ENCODE measurements at regions of chr12 and their contacts with region 1.

Region 1: GRCh38 chr12:121209624-121210572 is at the start of gene P2RX4:
- DNase-seq: peak; percentile 71 to 94 (median 87)
- ATAC-seq: peak; percentile 88
- H3K4me3 Mint-ChIP-seq: peak within 1 kb of the TSS; percentile 82 to 95 (median 90)
- H3K27ac Mint-ChIP-seq: peak within 1 kb of the TSS; percentile 92 to 99 (median 96)
- H3K4me1 Mint-ChIP-seq: peaks cover 8 to 39% (median 29%) of the 10 kb centered on the region in 4 donors
- H3K27me3 Mint-ChIP-seq: no peaks in the 10 kb centered on the region
- polyA plus RNA-seq, gene P2RX4: 27.8 to 33.8 (median 29.3) TPM

Region 2: GRCh38 chr12:121159467-121160307 is 50.2 kb before region 1 on chr12:
- POLR2A ChIA-PET with region 1: no interaction called
- DNase-seq: no peak
- ATAC-seq: no peak
- H3K4me3 Mint-ChIP-seq: no peak overlapping the region
- H3K27ac Mint-ChIP-seq: peak overlapping the region in 1 of 10 donors; percentile 71
- H3K4me1 Mint-ChIP-seq: peaks cover 0 to 8% (median 1%) of the 10 kb centered on the region in 4 donors
- H3K27me3 Mint-ChIP-seq: no peaks in the 10 kb centered on the region

Region 3: DNA sequence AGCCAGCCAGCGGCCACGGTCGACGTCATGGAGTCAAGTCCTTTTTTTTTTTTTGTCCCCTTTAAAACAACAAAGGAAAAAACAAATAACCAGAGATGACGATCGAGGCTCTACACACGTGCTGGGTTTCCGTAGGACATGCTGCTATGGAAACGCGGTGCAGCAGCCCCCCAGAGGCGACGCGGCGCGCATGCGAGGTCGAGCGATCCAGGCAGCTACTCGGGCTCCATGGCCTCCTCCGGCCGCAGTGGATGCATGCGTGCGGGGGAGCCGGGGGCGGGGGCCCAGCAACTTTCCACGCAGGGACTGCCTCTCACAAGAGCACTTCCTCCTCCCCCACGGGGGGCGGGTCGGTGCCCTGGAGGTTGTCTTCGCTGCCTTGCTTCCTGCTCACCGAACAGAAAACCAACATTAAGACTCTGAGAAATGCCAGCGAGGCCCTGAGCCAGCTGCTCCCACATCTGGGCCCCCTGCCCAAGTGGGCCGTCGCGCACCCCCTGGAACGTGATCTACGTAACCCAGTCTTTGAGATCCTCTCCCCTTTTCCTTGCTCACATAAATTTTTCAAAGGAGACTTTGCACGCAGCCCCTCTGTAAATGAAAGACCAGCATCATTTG is 30.7 kb after region 1 on chr12:
- POLR2A ChIA-PET with region 1: interaction called, 13 read pairs
- DNase-seq: peak; percentile 84 to 99 (median 98)
- ATAC-seq: peak; percentile 90 to 92
- H3K4me3 Mint-ChIP-seq: peak overlapping the region; percentile 79 to 91 (median 87)
- H3K27ac Mint-ChIP-seq: peak overlapping the region; percentile 99 to 100 (median 100)
- H3K4me1 Mint-ChIP-seq: peaks cover 15 to 57% (median 49%) of the 10 kb centered on the region in 4 donors
- H3K27me3 Mint-ChIP-seq: no peaks in the 10 kb centered on the region

Region 4: DNA sequence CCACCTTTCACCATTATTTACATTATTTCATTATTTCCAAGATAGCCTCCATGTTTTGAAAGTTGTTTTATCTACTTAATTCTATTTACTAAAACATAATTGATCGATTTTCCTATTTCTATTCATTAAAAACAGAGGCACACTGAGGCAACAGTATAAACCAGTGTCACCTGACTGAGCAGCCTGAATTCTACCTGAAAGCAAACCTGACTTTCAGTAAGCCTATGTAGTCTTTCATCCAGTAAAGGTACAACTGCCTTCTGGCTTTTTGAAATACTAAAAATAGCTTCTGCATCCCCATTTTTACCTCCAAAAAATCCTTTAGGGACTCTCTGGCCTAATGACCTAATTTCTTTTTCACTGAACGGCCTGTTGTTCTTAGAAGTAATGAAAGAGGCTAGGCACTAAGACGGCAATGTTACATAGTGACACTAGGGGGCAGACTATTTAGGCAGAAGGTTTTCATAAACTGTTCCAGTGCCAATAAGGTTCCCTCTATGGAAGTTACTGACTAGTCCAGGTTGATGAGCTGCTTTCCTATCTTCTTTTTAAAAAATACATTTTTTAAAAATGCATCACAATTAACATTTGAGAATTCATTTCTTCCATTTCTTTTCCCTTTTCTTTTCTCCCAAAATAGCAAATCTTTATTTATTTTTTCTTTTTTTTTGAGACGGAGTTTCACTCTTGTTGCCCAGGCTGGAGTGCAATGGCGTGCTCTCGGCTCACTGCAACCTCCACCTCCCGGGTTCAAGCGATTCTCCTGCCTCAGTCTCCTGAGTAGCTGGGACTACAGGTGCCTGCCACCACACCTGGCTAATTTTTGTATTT is 124.8 kb after region 1 on chr12:
- POLR2A ChIA-PET with region 1: no interaction called
- DNase-seq: peak in 5 of 10 donors; percentile 15 to 58 (median 52)
- ATAC-seq: peak; percentile 84 to 90
- H3K4me3 Mint-ChIP-seq: no peak overlapping the region
- H3K27ac Mint-ChIP-seq: peak overlapping the region in 5 of 10 donors; percentile 27 to 52 (median 37)
- H3K4me1 Mint-ChIP-seq: peaks cover 0 to 3% (median under 1%) of the 10 kb centered on the region in 4 donors
- H3K27me3 Mint-ChIP-seq: no peaks in the 10 kb centered on the region